GM12878 (cell line): ENCODE measurements at regions of chr1 and their contacts with region 1.

Region 1: DNA sequence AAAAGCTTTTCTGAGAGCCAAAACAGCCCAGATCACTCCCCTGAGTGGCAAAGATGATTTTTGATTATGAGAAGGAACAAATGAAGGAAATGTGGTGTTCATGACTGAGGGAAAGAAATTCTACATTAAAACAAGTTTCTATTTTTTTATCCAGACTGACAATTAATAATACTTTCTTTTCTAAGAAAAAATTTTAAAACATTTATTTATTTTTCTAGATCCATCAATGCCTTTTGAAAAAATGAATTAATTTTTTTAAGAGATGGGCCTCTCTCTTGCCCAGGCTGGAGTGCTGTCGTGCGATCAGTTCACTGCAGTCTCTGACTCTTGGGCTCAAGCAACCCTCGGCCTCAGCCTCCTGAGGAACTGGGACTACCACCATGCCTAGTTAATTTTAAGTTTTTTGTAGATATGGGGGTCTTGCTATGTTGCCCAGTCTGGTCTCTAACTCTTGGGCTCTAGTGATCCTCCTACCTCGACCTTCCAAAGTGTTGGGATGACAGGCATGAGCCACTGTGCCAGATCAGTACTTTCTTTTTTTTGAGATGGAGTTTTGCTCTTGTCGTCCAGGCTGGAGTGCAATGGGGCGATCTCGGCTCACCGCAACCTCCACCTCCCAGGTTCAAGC is 11.2 kb upstream of the TXNIP start:
- DNase-seq: no peak
- ATAC-seq: no peak
- H3K4me3 ChIP-seq: no peak overlapping the region
- H3K27ac ChIP-seq: no peak overlapping the region
- H3K4me1 ChIP-seq: no peaks in the 10 kb centered on the region
- H3K27me3 ChIP-seq: no peaks in the 10 kb centered on the region
- CTCF ChIP-seq: no peak
- EP300 ChIP-seq: no peak
- POLR2A ChIP-seq: no peak
- RAD21 ChIP-seq: no peak

Region 2: DNA sequence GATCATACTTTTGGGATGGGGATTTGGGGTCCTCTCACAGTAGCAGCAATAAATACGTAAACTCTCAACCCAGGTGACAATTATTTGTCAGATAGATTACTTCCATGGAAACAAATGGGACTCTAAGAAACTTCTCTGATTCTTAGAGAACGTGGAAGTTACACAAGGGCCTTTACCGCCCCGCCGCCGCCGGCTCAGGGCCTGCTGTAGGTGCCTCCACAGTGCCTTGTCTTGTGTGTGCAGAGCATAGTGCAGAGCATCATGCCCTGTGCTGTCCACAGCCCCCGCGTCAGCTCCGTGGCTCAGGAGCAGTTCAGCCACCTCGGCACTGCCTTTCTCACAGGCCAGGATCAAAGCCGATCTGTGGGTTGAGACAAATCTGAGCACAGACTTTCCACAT is 133.0 kb before region 1 on chr1:
- CTCF ChIA-PET with region 1: no interaction called
- POLR2A ChIA-PET with region 1: no interaction called
- RAD21 ChIA-PET with region 1: no interaction called
- SMC1A ChIA-PET with region 1: no interaction called
- in situ Hi-C with region 1: no loop called
- intact Hi-C with region 1: no loop called
- DNase-seq: no peak
- ATAC-seq: no peak
- H3K4me3 ChIP-seq: no peak overlapping the region
- H3K27ac ChIP-seq: no peak overlapping the region
- H3K4me1 ChIP-seq: 0 out of 2 replicates have a peak, but pooled peaks cover 3% of the 10 kb centered on the region
- H3K27me3 ChIP-seq: peaks cover 0 to 5% of the 10 kb centered on the region in 2 experiments; a peak in 3 of 4 replicates
- CTCF ChIP-seq: no peak
- EP300 ChIP-seq: no peak
- POLR2A ChIP-seq: no peak
- RAD21 ChIP-seq: no peak

Region 3: GRCh38 chr1:145927063-145927886 is 80.3 kb before region 1 on chr1 and contains the start of gene RBM8A:
- CTCF ChIA-PET with region 1: interaction called, 7 read pairs
- POLR2A ChIA-PET with region 1: interaction called, 14 read pairs
- RAD21 ChIA-PET with region 1: interaction called, 3 read pairs
- SMC1A ChIA-PET with region 1: interaction called, 3 read pairs
- in situ Hi-C with region 1: no loop called
- intact Hi-C with region 1: no loop called
- DNase-seq: peak; percentile 99
- ATAC-seq: peak; percentile 98
- H3K4me3 ChIP-seq: peak within 1 kb of the TSS; percentile 90
- H3K27ac ChIP-seq: peak within 1 kb of the TSS; percentile 97
- H3K4me1 ChIP-seq: peaks cover 6% of the 10 kb centered on the region; the same call in 1 of the 2 replicates
- H3K27me3 ChIP-seq: no peaks in the 10 kb centered on the region
- CTCF ChIP-seq: peak; percentile 37 to 67 (median 58)
- EP300 ChIP-seq: 0 out of 4 replicates have a peak, but pooled peaks of 1 of the 2 experiments have one; percentile 11
- POLR2A ChIP-seq: peak; percentile 95
- RAD21 ChIP-seq: no peak
- polyA plus RNA-seq, gene RBM8A: 665 to 1,248 TPM

Region 4: DNA sequence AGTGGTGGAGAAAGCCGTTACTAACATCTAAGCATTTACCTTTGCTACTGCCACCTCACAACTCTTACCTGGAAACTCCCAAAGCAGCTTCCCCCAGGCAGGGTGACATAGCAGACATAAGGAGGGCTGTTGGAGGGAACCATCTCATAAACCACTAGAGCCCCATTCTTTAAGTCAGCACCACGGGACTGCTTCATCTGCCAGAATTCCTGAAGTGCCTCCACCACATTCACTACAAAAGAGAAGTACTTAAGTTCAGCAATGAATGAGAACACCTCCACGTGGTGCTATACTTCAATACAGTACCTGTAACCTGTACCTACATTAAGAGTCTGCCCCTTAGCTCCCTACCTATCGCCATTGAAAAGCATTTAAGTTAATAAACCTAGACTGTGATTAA is 60.1 kb before region 1 on chr1:
- CTCF ChIA-PET with region 1: no interaction called
- POLR2A ChIA-PET with region 1: no interaction called
- RAD21 ChIA-PET with region 1: no interaction called
- SMC1A ChIA-PET with region 1: no interaction called
- in situ Hi-C with region 1: no loop called
- intact Hi-C with region 1: no loop called
- DNase-seq: no peak
- ATAC-seq: no peak
- H3K4me3 ChIP-seq: no peak overlapping the region
- H3K27ac ChIP-seq: no peak overlapping the region
- H3K4me1 ChIP-seq: no peaks in the 10 kb centered on the region
- H3K27me3 ChIP-seq: no peaks in the 10 kb centered on the region
- CTCF ChIP-seq: no peak
- EP300 ChIP-seq: no peak
- POLR2A ChIP-seq: no peak
- RAD21 ChIP-seq: no peak

Region 5: DNA sequence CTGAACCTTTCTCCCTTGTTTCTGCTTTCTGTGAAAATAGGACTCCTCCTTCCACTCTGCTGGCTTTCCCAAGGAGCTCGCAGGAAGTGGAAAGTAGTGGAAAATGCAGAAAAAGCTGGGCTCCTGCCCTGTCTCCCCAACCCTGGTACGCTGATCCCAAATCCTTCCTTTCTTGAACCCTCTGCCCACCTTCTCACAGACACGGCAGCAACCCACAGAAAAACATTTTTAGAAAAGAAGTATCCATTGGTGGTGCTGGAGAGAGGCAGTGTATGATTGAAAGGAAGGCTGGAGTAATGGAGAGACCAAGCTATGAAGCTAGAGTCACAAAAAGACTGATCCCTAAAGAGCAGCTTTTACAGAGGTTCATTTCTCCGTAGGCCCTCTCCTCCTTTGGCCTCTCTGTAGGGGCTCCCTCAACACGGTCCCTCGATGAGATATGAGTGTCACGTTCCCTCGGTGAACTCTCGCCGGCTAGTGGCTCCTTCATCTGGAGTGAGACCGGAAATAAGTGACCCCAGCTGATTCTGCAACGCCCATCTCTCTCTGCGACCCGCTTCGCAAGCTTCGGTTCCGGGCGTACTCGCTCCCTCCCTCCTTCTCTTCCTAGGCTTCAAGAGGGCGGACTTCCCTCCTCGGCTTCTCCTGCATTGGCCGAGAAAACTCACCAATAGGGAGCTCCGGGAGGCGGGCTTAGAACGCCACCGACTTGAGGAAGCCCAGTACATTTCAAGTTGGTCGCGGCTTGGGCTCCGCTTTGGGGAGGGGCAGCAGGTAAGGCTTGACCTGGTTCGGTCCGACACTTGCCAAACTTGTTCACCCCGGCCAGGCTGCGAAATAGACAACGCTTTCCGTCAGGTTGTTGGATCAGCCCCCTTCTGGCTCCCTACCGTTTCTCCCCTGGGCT is 43.4 kb before region 1 on chr1 and contains the starts of genes ANKRD34A and POLR3GL:
- CTCF ChIA-PET with region 1: interaction called, 14 read pairs
- POLR2A ChIA-PET with region 1: interaction called, 9 read pairs
- RAD21 ChIA-PET with region 1: interaction called, 16 read pairs
- SMC1A ChIA-PET with region 1: interaction called, 9 read pairs
- in situ Hi-C with region 1: no loop called
- intact Hi-C with region 1: no loop called
- DNase-seq: peak; percentile 80
- ATAC-seq: peak; percentile 95
- H3K4me3 ChIP-seq: peak within 1 kb of the TSS; percentile 79
- H3K27ac ChIP-seq: peak within 1 kb of the TSS; percentile 73
- H3K4me1 ChIP-seq: peaks cover 19% of the 10 kb centered on the region
- H3K27me3 ChIP-seq: no peaks in the 10 kb centered on the region; a peak in 1 of 4 replicates
- CTCF ChIP-seq: no peak
- EP300 ChIP-seq: no peak
- POLR2A ChIP-seq: peak; percentile 98
- RAD21 ChIP-seq: no peak
- polyA plus RNA-seq, gene ANKRD34A: 0.40 to 0.42 TPM
- polyA plus RNA-seq, gene POLR3GL: 12.8 to 25.5 TPM

Region 6: DNA sequence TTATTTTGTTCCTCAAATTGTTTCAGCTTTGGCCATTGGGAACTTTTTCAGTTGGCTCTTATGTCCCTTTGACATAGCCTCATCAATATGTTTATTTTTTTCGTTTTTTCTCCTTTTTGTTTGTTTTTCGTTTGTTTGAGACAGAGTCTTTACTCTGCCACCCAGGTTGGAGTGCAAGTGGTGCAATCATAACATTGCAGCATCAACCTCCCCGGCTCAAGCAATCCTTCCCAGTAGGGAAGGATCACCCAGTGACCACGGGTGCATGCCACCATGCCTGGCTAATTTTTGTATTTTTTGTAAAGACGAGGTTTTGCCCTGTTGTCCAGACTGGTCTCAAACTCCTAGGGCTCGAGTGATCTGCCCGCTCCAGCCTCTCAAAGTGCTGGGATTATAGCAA is 35.0 kb before region 1 on chr1:
- CTCF ChIA-PET with region 1: interaction called, 361 read pairs
- POLR2A ChIA-PET with region 1: interaction called, 19 read pairs
- RAD21 ChIA-PET with region 1: interaction called, 136 read pairs
- SMC1A ChIA-PET with region 1: interaction called, 180 read pairs
- in situ Hi-C with region 1: loop called (anchors 5 kb)
- intact Hi-C with region 1: loop called (anchors 1 kb)
- DNase-seq: no peak
- ATAC-seq: no peak
- H3K4me3 ChIP-seq: no peak overlapping the region
- H3K27ac ChIP-seq: no peak overlapping the region
- H3K4me1 ChIP-seq: peaks cover 4% of the 10 kb centered on the region
- H3K27me3 ChIP-seq: no peaks in the 10 kb centered on the region
- CTCF ChIP-seq: no peak
- EP300 ChIP-seq: no peak
- POLR2A ChIP-seq: no peak
- RAD21 ChIP-seq: no peak

Region 7: DNA sequence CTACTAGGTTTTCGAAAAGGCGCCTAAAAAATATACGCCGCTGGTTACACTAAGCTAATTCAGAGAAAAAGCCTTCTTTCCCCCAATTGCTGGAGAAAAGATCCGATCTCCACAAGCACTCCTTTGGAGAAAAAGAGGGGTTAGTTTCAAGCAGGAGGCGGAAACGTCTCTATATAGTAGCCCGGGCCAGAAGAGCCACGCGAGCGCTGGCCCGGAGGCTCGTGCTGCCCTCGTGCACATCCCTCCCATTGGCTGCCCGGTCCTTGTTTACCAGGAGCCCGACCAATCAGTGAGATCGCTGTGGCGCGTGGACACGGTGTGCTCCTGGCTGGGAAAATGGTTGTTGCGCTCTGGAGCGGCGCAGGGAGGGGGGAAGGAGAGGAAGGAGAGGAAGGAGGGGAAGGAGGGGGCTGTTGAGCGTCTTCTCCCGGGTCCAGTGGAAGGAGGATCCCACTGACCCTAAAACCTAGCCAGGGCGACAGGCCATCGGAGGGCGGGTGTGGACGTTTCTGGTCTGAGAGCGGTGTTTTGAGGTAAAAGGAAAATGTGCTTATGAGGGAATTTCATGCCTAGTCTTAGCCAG is 11.1 kb before region 1 on chr1 and contains the start of gene TXNIP:
- CTCF ChIA-PET with region 1: interaction called, 23 read pairs
- POLR2A ChIA-PET with region 1: interaction called, 6 read pairs
- RAD21 ChIA-PET with region 1: interaction called, 6 read pairs
- SMC1A ChIA-PET with region 1: interaction called, 15 read pairs
- in situ Hi-C with region 1: no loop called
- intact Hi-C with region 1: no loop called
- DNase-seq: peak; percentile 51
- ATAC-seq: peak; percentile 92
- H3K4me3 ChIP-seq: peak within 1 kb of the TSS; percentile 81
- H3K27ac ChIP-seq: peak within 1 kb of the TSS; percentile 82
- H3K4me1 ChIP-seq: peaks cover 8% of the 10 kb centered on the region
- H3K27me3 ChIP-seq: no peaks in the 10 kb centered on the region
- CTCF ChIP-seq: no peak
- EP300 ChIP-seq: no peak; a peak in 1 of 4 replicates
- POLR2A ChIP-seq: peak; percentile 86
- RAD21 ChIP-seq: no peak
- polyA plus RNA-seq, gene TXNIP: 48.7 to 75.5 TPM

Region 8: GRCh38 chr1:146049436-146049835 is 41.8 kb after region 1 on chr1:
- CTCF ChIA-PET with region 1: no interaction called
- POLR2A ChIA-PET with region 1: no interaction called
- RAD21 ChIA-PET with region 1: no interaction called
- SMC1A ChIA-PET with region 1: no interaction called
- in situ Hi-C with region 1: no loop called
- intact Hi-C with region 1: no loop called
- DNase-seq: no peak
- ATAC-seq: no peak
- H3K4me3 ChIP-seq: no peak overlapping the region
- H3K27ac ChIP-seq: no peak overlapping the region
- H3K4me1 ChIP-seq: no peaks in the 10 kb centered on the region; the same call in 1 of the 2 replicates
- H3K27me3 ChIP-seq: no peaks in the 10 kb centered on the region
- CTCF ChIP-seq: no peak
- EP300 ChIP-seq: no peak
- POLR2A ChIP-seq: no peak
- RAD21 ChIP-seq: no peak